ENCODE measurements at regions of chr19 and their contacts with region 1.

Region 1: GRCh38 chr19:7652061-7652641 is 15.2 kb downstream of the STXBP2 start:
- DNase-seq: peak; percentile 87
- ATAC-seq: peak; percentile 90
- H3K4me3 ChIP-seq: peak overlapping the region; percentile 32 to 74 (median 49)
- H3K4me3 Mint-ChIP-seq: peak overlapping the region; percentile 81
- H3K27ac ChIP-seq: no peak overlapping the region
- H3K27ac Mint-ChIP-seq: peak overlapping the region; percentile 70
- H3K4me1 ChIP-seq: peaks cover 0 to 6% of the 10 kb centered on the region in 2 donors
- H3K4me1 Mint-ChIP-seq: peaks cover 8% of the 10 kb centered on the region
- H3K27me3 ChIP-seq: no peaks in the 10 kb centered on the region
- H3K27me3 Mint-ChIP-seq: no peaks in the 10 kb centered on the region
- CTCF ChIP-seq: peak; percentile 98

Region 2: GRCh38 chr19:7605490-7606222 is 46.5 kb before region 1 on chr19:
- CTCF ChIA-PET with region 1: no interaction called
- POLR2A ChIA-PET with region 1: no interaction called
- intact Hi-C with region 1: no loop called
- DNase-seq: peak; percentile 52
- ATAC-seq: no peak
- H3K4me3 ChIP-seq: no peak overlapping the region
- H3K4me3 Mint-ChIP-seq: no peak overlapping the region
- H3K27ac ChIP-seq: no peak overlapping the region
- H3K27ac Mint-ChIP-seq: no peak overlapping the region
- H3K4me1 ChIP-seq: no peaks in the 10 kb centered on the region
- H3K4me1 Mint-ChIP-seq: no peaks in the 10 kb centered on the region
- H3K27me3 ChIP-seq: peaks cover 0 to 23% (median 0%) of the 10 kb centered on the region in 4 experiments
- H3K27me3 Mint-ChIP-seq: peaks cover 14% of the 10 kb centered on the region
- CTCF ChIP-seq: no peak

Region 3: DNA sequence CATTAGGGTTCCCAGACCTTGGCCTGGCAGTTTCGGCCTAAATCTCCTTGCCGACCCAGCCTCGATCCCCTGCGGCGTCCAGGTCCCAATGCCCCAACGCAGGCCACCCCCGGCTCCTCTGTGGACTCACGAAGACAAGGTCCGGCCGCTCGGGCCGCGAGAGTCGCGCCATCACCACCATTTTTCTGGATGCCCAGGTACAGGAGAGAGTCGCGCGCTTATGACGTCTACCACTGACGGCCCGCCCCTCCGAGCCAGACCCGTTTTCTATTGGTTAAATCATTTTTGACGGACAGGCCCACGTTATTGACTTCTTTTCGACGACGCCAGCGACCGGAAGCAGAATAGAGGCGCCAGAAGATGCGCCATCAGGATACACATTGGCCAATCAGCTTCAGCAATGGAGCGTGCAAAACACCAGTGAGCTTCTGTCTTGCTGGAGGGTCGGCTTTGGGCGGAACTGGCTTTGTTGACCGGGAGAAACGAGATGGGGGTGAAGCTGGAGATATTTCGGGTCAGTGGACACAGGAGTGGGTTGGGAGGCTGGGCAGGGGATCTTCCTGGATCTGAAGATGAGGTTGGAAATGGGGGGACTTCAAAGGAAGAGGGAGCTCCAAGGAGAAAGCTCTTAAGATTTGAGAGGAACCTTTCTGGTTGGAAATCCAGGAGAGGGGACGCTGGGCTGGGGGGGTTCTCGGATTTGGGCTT is 22.6 kb before region 1 on chr19 and contains the starts of genes PET100 and XAB2:
- CTCF ChIA-PET with region 1: interaction called, 10 read pairs
- POLR2A ChIA-PET with region 1: no interaction called
- intact Hi-C with region 1: no loop called
- DNase-seq: peak; percentile 99
- ATAC-seq: peak; percentile 96
- H3K4me3 ChIP-seq: peak within 1 kb of the TSS; percentile 78 to 100 (median 99)
- H3K4me3 Mint-ChIP-seq: peak within 1 kb of the TSS; percentile 92
- H3K27ac ChIP-seq: peak within 1 kb of the TSS; percentile 87 to 91
- H3K27ac Mint-ChIP-seq: peak within 1 kb of the TSS; percentile 95
- H3K4me1 ChIP-seq: peaks cover 19 to 31% of the 10 kb centered on the region in 2 donors
- H3K4me1 Mint-ChIP-seq: peaks cover 43% of the 10 kb centered on the region
- H3K27me3 ChIP-seq: no peaks in the 10 kb centered on the region
- H3K27me3 Mint-ChIP-seq: no peaks in the 10 kb centered on the region
- CTCF ChIP-seq: no peak
- total RNA-seq, gene PET100: 89.1 and 100 TPM in 2 replicates
- total RNA-seq, gene XAB2: 62.7 and 64.2 TPM in 2 replicates

Region 4: GRCh38 chr19:7665076-7665475 is 12.9 kb after region 1 on chr19:
- CTCF ChIA-PET with region 1: interaction called, 12 read pairs
- POLR2A ChIA-PET with region 1: no interaction called
- intact Hi-C with region 1: no loop called
- DNase-seq: no peak
- ATAC-seq: no peak
- H3K4me3 ChIP-seq: no peak overlapping the region
- H3K4me3 Mint-ChIP-seq: no peak overlapping the region
- H3K27ac ChIP-seq: no peak overlapping the region
- H3K27ac Mint-ChIP-seq: no peak overlapping the region
- H3K4me1 ChIP-seq: peaks cover under 1% of the 10 kb centered on the region in 2 donors
- H3K4me1 Mint-ChIP-seq: peaks cover 2% of the 10 kb centered on the region
- H3K27me3 ChIP-seq: peaks cover 0 to 21% (median 5%) of the 10 kb centered on the region in 4 experiments
- H3K27me3 Mint-ChIP-seq: peaks cover 18% of the 10 kb centered on the region
- CTCF ChIP-seq: no peak

Measured in B cell (primary cell).